Colonic mucosa (tissue), 4 donors: ENCODE measurements at regions of chr12 and their contacts with region 1.

Region 1: GRCh38 chr12:20946732-20947131 is 136.2 kb downstream of the SLCO1B3 start:
- DNase-seq: peak; percentile 36
- H3K4me3 ChIP-seq: no peak overlapping the region
- H3K27ac ChIP-seq: no peak overlapping the region
- H3K4me1 ChIP-seq: no peaks in the 10 kb centered on the region
- H3K27me3 ChIP-seq: no peaks in the 10 kb centered on the region
- CTCF ChIP-seq: peak; percentile 48

Region 2: GRCh38 chr12:21065845-21066244 is 119.1 kb after region 1 on chr12:
- intact Hi-C with region 1: loop called (anchors 5 kb)
- DNase-seq: no peak
- H3K4me3 ChIP-seq: no peak overlapping the region
- H3K27ac ChIP-seq: no peak overlapping the region
- H3K4me1 ChIP-seq: no peaks in the 10 kb centered on the region
- H3K27me3 ChIP-seq: no peaks in the 10 kb centered on the region
- CTCF ChIP-seq: peak; percentile 29

Region 3: GRCh38 chr12:21169878-21170472 is 223.2 kb after region 1 on chr12:
- intact Hi-C with region 1: loop called (anchors 2 kb)
- DNase-seq: peak; percentile 50
- H3K4me3 ChIP-seq: no peak overlapping the region
- H3K27ac ChIP-seq: no peak overlapping the region
- H3K4me1 ChIP-seq: no peaks in the 10 kb centered on the region
- H3K27me3 ChIP-seq: no peaks in the 10 kb centered on the region
- CTCF ChIP-seq: peak; percentile 46